ENCODE measurements at regions of chr18 and their contacts with region 1.

Region 1: DNA sequence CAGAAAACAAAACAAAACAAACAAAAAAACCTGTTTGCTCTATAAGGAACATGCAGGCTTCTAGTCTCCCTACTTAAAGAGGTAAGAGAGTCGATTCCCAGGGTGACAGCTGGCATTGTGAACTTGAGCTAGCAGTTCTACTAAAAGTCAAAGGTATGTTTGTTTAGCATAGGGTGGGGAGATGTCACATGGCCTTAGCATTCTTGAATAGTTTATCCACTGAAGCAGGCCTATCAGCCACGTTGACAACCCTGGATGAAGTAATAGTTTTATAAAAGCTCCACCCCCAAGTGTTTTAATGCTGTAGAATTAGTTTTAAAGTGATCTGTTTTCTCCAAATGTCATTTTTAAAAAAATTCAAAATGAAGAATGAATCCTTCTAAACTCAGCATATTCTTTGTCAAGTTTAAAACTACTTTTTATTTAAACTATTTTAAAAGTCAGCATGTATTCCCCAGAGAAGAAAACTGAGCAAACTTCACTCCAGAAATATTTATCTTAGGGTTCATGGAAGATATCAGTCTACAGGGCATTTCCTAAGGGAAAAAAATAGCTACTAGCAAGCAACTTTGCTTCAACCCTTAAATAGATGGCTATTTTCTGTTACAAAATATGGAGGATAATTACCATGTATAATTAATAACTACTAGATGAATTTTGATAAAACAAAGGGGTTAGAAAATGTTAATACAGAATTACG is 1.7 kb downstream of the MYOM1 start:
- DNase-seq: peak; percentile 96
- ATAC-seq: peak; percentile 99
- H3K4me3 ChIP-seq: peak overlapping the region in 2 of 3 experiments; percentile 19 to 20; a peak in 1 of 6 replicates
- H3K27ac ChIP-seq: peak overlapping the region; percentile 76
- H3K4me1 ChIP-seq: peaks cover 50% of the 10 kb centered on the region
- H3K27me3 ChIP-seq: no peaks in the 10 kb centered on the region
- CTCF ChIP-seq: no peak
- EP300 ChIP-seq: peak in 1 of 2 experiments; percentile 82; a peak in 2 of 4 replicates
- POLR2A ChIP-seq: no peak
- RAD21 ChIP-seq: no peak

Region 2: DNA sequence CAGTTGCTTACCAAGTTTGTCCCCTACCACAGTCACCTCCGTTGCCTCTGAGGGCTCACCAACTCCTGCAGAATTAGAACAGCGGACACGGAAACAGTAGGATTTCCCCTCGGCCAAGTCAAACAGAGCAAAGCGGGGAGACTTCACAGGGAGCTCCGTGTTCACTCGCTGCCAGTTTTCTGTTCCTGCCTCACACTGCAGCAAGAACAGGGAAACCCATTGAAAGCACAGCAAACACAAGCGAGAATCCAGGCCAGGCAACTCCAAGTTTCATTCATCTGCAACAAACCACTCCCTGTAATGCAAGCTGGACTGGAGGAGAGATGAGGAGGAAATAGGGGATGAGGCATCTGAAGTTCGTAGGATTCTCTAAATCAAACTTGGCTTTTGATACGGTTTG is 82.6 kb before region 1 on chr18:
- CTCF ChIA-PET with region 1: no interaction called
- POLR2A ChIA-PET with region 1: no interaction called
- in situ Hi-C with region 1: no loop called
- intact Hi-C with region 1: no loop called
- DNase-seq: no peak
- ATAC-seq: no peak
- H3K4me3 ChIP-seq: no peak overlapping the region
- H3K27ac ChIP-seq: no peak overlapping the region
- H3K4me1 ChIP-seq: peaks cover 2% of the 10 kb centered on the region
- H3K27me3 ChIP-seq: no peaks in the 10 kb centered on the region
- CTCF ChIP-seq: no peak
- EP300 ChIP-seq: no peak
- POLR2A ChIP-seq: no peak
- RAD21 ChIP-seq: no peak

Region 3: DNA sequence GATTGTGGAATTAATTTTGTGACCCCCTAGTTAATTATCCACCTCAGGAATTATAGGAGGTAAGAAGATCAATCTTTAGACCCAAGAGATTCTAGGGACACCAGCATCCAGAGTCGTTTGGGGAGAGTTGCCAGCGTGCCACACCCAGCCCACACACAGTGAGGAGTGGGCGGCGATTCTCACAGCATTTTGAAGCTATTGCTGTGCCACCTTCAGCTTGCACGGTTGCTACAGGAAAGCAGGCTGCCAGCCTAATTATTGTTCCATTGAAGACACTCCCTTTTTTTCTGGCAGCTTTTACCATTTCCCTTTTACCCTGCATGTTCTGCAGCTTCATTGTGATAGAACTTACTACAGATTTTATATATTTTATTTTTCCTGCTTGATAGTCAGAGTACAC is 16.4 kb after region 1 on chr18:
- CTCF ChIA-PET with region 1: no interaction called
- POLR2A ChIA-PET with region 1: interaction called, 25 read pairs
- in situ Hi-C with region 1: no loop called
- intact Hi-C with region 1: loop called (anchors 2 kb)
- DNase-seq: no peak
- ATAC-seq: peak; percentile 8
- H3K4me3 ChIP-seq: peak overlapping the region in 1 of 3 experiments; percentile 8; a peak in 1 of 6 replicates
- H3K27ac ChIP-seq: peak overlapping the region; percentile 95
- H3K4me1 ChIP-seq: peaks cover 66% of the 10 kb centered on the region
- H3K27me3 ChIP-seq: no peaks in the 10 kb centered on the region
- CTCF ChIP-seq: no peak
- EP300 ChIP-seq: no peak
- POLR2A ChIP-seq: no peak
- RAD21 ChIP-seq: no peak

Measured in HepG2 (cell line).